GM10248 (cell line): ENCODE measurements at regions of chr10 and their contacts with region 1.

Region 1: DNA sequence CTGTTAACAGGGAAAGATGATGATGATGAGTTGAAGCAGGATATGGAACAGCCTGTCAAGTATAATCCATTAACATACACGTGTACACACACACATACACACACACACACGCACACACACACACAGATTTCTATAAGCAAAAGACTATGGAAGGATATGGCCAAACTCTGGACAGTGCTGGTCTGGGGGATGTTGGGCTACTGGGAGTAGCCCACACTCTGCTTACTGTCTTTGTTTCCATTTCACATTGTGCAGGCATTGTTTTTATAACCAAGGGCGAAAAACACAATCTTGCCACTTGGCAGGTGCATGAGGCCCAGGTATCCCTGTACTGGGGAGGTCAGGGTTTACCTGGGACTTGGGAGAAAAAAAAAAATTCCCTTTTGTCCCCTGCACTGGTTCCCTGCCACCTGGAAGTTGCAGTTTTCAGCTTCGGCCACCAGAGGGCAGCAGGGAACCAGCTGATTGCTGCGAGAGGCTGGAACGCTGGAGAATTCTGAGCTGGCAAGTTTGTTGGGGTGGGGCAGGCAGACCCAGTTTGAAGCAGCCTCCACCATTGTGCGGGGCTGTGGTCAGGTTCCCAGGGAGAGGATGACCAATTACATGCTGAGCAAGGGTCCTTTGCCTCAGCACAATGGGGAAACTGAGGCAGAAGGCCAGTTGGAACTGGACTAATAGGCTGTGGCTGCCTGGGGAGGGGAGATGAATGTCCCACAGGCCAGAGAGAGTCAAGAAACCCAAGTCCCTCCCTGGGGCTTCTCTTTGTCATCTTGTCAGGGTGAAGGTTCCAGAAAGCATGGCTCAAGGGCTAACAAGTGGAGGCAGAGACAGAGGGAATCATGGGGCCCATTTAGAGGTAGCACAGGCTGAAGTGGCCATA is 27.3 kb downstream of the PPIF start:
- DNase-seq: peak; percentile 85
- CTCF ChIP-seq: peak; percentile 98

Region 2: GRCh38 chr10:78899996-78900714 is 474.4 kb before region 1 on chr10:
- CTCF ChIA-PET with region 1: no interaction called
- POLR2A ChIA-PET with region 1: no interaction called
- DNase-seq: no peak
- CTCF ChIP-seq: no peak

Region 3: GRCh38 chr10:79105150-79105739 is 269.3 kb before region 1 on chr10:
- CTCF ChIA-PET with region 1: no interaction called
- POLR2A ChIA-PET with region 1: no interaction called
- DNase-seq: no peak
- CTCF ChIP-seq: no peak

Region 4: GRCh38 chr10:79347226-79347893 is 27.2 kb before region 1 on chr10 and contains the start of gene PPIF:
- CTCF ChIA-PET with region 1: interaction called, 14 read pairs
- POLR2A ChIA-PET with region 1: no interaction called
- DNase-seq: peak; percentile 95
- CTCF ChIP-seq: peak; percentile 96

Region 5: GRCh38 chr10:79358783-79359182 is 15.8 kb before region 1 on chr10:
- CTCF ChIA-PET with region 1: interaction called, 16 read pairs
- POLR2A ChIA-PET with region 1: no interaction called
- DNase-seq: peak; percentile 29
- CTCF ChIP-seq: no peak

Region 6: GRCh38 chr10:79454259-79454658 is 79.7 kb after region 1 on chr10:
- CTCF ChIA-PET with region 1: interaction called, 10 read pairs
- POLR2A ChIA-PET with region 1: no interaction called
- DNase-seq: no peak
- CTCF ChIP-seq: no peak

Region 7: GRCh38 chr10:79487296-79488194 is 113.0 kb after region 1 on chr10:
- CTCF ChIA-PET with region 1: interaction called, 54 read pairs
- POLR2A ChIA-PET with region 1: no interaction called
- DNase-seq: peak; percentile 78
- CTCF ChIP-seq: peak; percentile 73

Region 8: DNA sequence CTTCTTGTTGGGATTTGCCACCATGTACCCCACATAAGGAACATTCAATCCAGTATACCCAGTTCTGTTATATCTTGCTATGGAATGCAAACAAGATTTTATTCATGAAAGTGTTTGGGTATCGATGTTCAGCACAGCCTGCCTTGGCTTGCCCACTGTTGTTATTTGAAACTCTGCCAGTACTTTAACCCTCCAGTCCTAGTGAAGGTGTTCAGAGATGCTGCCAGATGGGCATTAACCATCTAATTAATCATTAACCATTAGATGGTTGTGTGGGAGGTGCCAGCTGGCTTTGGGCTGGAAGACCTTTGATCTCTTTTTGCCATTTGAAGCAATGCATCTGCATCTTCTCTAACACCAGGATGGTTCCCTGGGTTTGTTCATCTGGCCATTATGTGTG is 1526.1 kb after region 1 on chr10:
- CTCF ChIA-PET with region 1: no interaction called
- POLR2A ChIA-PET with region 1: no interaction called
- DNase-seq: no peak
- CTCF ChIP-seq: no peak